ENCODE measurements at regions of chr4 and their contacts with region 1.

Region 1: DNA sequence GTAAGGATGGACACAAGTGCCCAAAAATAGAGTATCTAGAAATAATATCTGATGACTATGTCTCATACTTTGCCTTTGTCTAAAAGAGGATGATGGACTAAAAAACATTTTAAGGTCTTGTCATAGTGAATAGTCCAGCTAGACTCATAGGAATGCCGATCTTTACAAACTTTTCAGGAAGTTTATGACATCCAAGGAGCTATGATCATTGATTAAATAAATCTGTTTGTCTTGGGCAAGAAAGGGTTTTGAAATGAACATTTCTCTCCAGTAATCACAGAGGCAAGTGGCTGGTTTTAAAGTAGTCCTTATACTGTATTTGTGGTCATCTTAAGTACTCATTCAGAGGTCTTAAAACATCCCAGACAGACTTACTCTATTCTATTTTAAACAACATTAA is 109.8 kb downstream of the MAPK10 start:
- DNase-seq: no peak
- H3K4me3 ChIP-seq: no peak overlapping the region
- H3K27ac ChIP-seq: no peak overlapping the region
- H3K27me3 ChIP-seq: no peaks in the 10 kb centered on the region
- CTCF ChIP-seq: no peak

Region 2: DNA sequence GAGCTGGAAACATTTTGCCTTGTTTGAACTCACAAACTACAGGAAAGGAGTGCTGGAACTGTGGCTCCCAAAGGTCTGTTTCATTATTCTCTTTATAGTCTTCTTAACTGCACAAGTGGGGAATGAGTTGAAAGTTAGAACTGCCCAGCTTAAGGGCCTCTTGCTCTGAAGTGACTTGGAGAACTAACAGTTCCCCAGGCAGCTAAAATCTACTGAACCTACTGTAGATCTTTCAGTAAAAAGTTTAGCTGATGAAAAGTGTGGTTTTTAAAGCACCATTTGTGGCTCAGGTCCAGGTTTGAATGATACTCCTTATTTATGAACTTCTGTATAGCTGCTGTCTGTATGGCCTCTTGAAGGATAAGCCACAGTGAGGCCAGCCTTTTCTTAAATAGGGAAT is 243.9 kb before region 1 on chr4:
- CTCF ChIA-PET with region 1: no interaction called
- POLR2A ChIA-PET with region 1: interaction called, 10 read pairs
- DNase-seq: no peak
- H3K4me3 ChIP-seq: no peak overlapping the region
- H3K27ac ChIP-seq: no peak overlapping the region
- H3K27me3 ChIP-seq: no peaks in the 10 kb centered on the region
- CTCF ChIP-seq: no peak